ENCODE measurements at regions of chr10 and their contacts with region 1.

Region 1: GRCh38 chr10:21273400-21273932 is 252.0 kb downstream of the SKIDA1 start:
- DNase-seq: no peak
- ATAC-seq: no peak
- H3K4me3 ChIP-seq: no peak overlapping the region
- H3K27ac ChIP-seq: no peak overlapping the region
- H3K4me1 ChIP-seq: no peaks in the 10 kb centered on the region
- H3K27me3 ChIP-seq: no peaks in the 10 kb centered on the region
- CTCF ChIP-seq: no peak

Region 2: GRCh38 chr10:20858292-20859124 is 415.0 kb before region 1 on chr10:
- intact Hi-C with region 1: loop called in 1 of 3 experiments (anchors 5 kb)
- DNase-seq: no peak
- ATAC-seq: peak in 3 of 4 donors; percentile 57 to 67 (median 61)
- H3K4me3 ChIP-seq: no peak overlapping the region
- H3K27ac ChIP-seq: no peak overlapping the region
- H3K4me1 ChIP-seq: no peaks in the 10 kb centered on the region
- H3K27me3 ChIP-seq: no peaks in the 10 kb centered on the region
- CTCF ChIP-seq: peak in 2 of 4 donors; percentile 32 to 54